ENCODE measurements at regions of chr19 and their contacts with region 1.

Region 1: GRCh38 chr19:49929611-49930482 is 543 bp upstream of the NUP62 start:
- H3K4me3 Mint-ChIP-seq: peak overlapping the region; percentile 85
- H3K27ac Mint-ChIP-seq: peak overlapping the region; percentile 92
- H3K4me1 Mint-ChIP-seq: peaks cover 72% of the 10 kb centered on the region
- H3K27me3 Mint-ChIP-seq: peaks cover 10% of the 10 kb centered on the region

Region 2: GRCh38 chr19:49832556-49832955 is 97.3 kb before region 1 on chr19:
- intact Hi-C with region 1: no loop called
- H3K4me3 Mint-ChIP-seq: no peak overlapping the region
- H3K27ac Mint-ChIP-seq: no peak overlapping the region
- H3K4me1 Mint-ChIP-seq: peaks cover 29% of the 10 kb centered on the region
- H3K27me3 Mint-ChIP-seq: no peaks in the 10 kb centered on the region

Region 3: DNA sequence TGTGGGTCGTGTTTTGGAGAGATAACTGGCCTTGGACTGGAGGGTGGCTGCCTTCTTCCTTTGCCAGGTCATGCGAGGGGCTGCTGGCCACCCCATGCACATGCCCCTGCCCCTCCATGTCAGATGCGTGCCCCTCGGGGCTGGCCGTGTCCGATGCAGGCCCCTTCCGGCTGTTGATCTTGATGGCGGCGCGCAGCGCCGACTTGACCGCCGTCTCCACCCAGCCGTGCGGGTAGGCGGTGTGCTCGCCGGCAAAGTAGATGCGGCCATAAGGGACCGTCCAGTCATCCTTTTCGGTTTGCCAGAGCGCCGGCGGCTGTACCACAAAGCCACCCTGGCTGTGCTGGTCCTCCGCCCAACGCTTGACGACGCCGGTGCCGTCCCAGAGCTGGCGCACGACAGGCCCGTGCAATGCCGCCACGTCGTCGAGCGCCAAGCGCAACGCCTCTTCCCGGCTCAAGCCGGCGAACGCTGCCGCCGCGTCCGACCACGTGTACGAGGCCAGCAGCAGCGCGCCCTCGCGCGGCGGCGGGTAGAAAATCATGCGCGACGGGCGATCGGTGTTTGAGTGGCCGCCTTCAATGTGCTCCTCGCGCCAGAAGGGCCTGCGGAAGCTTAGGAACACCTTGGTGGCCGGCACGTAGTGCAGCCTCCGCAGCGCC is 40.0 kb before region 1 on chr19:
- intact Hi-C with region 1: loop called (anchors 5 kb)
- H3K4me3 Mint-ChIP-seq: peak overlapping the region; percentile 64
- H3K27ac Mint-ChIP-seq: no peak overlapping the region
- H3K4me1 Mint-ChIP-seq: peaks cover 81% of the 10 kb centered on the region
- H3K27me3 Mint-ChIP-seq: peaks cover 6% of the 10 kb centered on the region

Region 4: DNA sequence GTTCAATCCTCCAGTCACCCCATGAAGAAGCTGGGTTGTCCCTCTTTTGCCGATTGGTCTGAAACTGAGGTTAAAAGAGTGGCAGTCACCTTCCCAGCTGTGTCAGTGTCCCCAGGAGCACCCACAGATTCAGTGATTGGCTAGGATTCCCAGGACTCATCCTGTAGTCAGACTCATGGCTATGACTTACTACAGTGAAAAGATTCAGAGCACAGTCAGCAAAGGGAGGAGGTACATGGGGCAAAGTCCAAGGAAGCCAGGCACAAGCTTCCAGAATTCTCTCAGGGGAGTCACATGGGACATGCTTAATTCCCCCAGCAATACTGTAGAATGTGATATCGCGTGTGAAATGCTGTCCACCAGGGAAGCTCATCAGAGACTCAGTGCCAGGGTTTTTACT is 110.1 kb after region 1 on chr19:
- intact Hi-C with region 1: no loop called
- H3K4me3 Mint-ChIP-seq: no peak overlapping the region
- H3K27ac Mint-ChIP-seq: no peak overlapping the region
- H3K4me1 Mint-ChIP-seq: no peaks in the 10 kb centered on the region
- H3K27me3 Mint-ChIP-seq: no peaks in the 10 kb centered on the region

Measured in dendritic cell treated with granulocyte-macrophage colony-stimulating factor and Interleukin-4, amounts not matched to agents 40 ng/mL and 50 ng/mL, for 4 days (primary cell).